ENCODE measurements at regions of chr18 and their contacts with region 1.

Region 1: DNA sequence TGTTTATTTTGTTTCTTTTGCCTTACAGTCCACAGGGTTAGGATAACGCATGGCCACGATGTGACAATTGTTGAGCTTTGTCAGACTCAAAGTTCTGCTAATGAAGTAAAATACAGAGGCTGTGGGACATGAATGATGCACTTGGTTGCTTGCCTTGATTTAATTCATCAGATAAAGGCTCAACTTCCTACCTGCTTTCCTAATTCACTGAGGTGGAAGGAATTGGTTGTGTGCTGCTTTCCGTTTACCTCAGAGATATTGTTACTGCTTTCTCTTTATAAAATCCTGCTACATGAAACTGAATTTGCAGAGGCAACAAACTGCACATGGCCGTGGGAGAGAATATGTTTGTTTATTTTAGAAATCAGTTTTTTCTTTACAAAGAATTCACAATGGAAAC is 6.6 kb downstream of the RIT2 start:
- DNase-seq: no peak
- ATAC-seq: no peak
- H3K4me3 Mint-ChIP-seq: no peak overlapping the region
- H3K27ac Mint-ChIP-seq: no peak overlapping the region
- H3K4me1 Mint-ChIP-seq: no peaks in the 10 kb centered on the region
- H3K27me3 Mint-ChIP-seq: no peaks in the 10 kb centered on the region

Region 2: DNA sequence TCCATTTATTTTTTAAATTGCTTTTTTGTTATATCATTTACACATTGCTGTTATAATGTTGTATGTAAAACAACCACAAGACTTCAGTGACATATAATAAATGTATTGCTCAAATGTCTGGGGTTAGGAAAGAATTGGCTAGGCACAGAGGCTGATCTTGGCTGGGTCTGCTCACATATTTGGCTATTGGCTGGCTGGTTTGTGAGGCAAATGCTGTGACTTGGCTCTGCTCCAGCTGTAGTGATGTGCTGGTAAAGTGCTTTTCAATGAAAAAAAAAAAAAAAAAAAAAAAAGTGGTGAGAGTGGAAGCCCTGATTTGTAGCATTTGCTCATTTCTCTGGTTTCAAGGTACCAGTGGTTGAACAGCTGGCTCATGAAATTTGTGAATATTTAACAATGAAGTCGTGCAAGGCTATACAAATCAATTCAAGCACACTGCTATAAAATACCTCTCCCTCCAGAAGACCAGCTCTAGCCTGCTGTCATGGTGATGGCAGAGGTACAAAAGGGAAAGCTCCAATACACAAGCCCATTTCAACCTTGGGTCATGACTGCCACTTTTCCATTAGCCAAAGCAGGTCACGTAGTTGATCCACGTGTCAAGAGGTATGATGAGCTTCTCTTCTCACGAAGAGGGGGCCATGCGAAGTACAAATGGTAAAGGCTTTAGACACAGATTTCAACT is 50.3 kb after region 1 on chr18:
- CTCF ChIA-PET with region 1: no interaction called
- POLR2A ChIA-PET with region 1: no interaction called
- intact Hi-C with region 1: loop called in 1 of 2 experiments (anchors 5 kb)
- DNase-seq: no peak
- ATAC-seq: no peak
- H3K4me3 Mint-ChIP-seq: no peak overlapping the region
- H3K27ac Mint-ChIP-seq: no peak overlapping the region
- H3K4me1 Mint-ChIP-seq: no peaks in the 10 kb centered on the region
- H3K27me3 Mint-ChIP-seq: no peaks in the 10 kb centered on the region